HEK293 (cell line): ENCODE measurements at regions of chr10 and their contacts with region 1.

Region 1: DNA sequence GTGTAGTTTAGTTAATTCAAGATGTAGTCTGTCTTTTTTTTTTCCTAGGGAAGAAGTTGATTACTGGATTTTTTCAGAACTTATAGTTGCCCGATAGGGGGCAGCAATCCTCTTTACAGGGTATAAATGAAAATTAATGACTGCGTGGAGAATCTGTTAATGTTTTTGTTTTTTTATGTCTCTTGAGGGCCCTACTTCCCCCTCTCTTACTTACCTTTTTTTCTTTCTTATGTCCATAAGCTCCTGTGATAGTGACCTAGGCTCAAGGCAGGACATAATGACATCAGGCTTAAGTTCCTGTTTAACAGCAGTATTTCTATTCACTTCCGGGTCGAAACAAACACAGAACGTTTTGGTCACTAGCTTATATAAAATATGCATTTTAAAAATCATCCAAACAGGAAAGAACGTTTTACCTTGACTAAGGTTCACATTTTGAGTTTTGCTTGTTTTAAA is 18.8 kb downstream of the CDC123 start:
- H3K4me3 ChIP-seq: no peak overlapping the region
- H3K27ac ChIP-seq: no peak overlapping the region
- H3K4me1 ChIP-seq: 0 out of 2 replicates have a peak, but pooled peaks cover 7% of the 10 kb centered on the region
- CTCF ChIP-seq: no peak

Region 2: GRCh38 chr10:12111528-12111927 is 103.3 kb before region 1 on chr10:
- CTCF ChIA-PET with region 1: no interaction called
- POLR2A ChIA-PET with region 1: no interaction called
- H3K4me3 ChIP-seq: no peak overlapping the region
- H3K27ac ChIP-seq: no peak overlapping the region
- H3K4me1 ChIP-seq: no peaks in the 10 kb centered on the region
- CTCF ChIP-seq: no peak

Region 3: GRCh38 chr10:12202226-12202625 is 12.6 kb before region 1 on chr10:
- CTCF ChIA-PET with region 1: interaction called, 29 read pairs
- POLR2A ChIA-PET with region 1: no interaction called
- H3K4me3 ChIP-seq: no peak overlapping the region
- H3K27ac ChIP-seq: no peak overlapping the region
- H3K4me1 ChIP-seq: no peaks in the 10 kb centered on the region
- CTCF ChIP-seq: no peak

Region 4: GRCh38 chr10:12228851-12229250 is 14.1 kb after region 1 on chr10:
- CTCF ChIA-PET with region 1: interaction called, 23 read pairs
- POLR2A ChIA-PET with region 1: interaction called, 4 read pairs
- H3K4me3 ChIP-seq: no peak overlapping the region
- H3K27ac ChIP-seq: no peak overlapping the region
- H3K4me1 ChIP-seq: no peaks in the 10 kb centered on the region
- CTCF ChIP-seq: no peak

Region 5: GRCh38 chr10:12235796-12236195 is 21.0 kb after region 1 on chr10:
- CTCF ChIA-PET with region 1: interaction called, 11 read pairs
- POLR2A ChIA-PET with region 1: no interaction called
- H3K4me3 ChIP-seq: no peak overlapping the region
- H3K27ac ChIP-seq: no peak overlapping the region
- H3K4me1 ChIP-seq: no peaks in the 10 kb centered on the region
- CTCF ChIP-seq: no peak

Region 6: GRCh38 chr10:12656518-12657142 is 441.8 kb after region 1 on chr10:
- CTCF ChIA-PET with region 1: interaction called, 16 read pairs
- POLR2A ChIA-PET with region 1: no interaction called
- H3K4me3 ChIP-seq: no peak overlapping the region
- H3K27ac ChIP-seq: no peak overlapping the region
- H3K4me1 ChIP-seq: no peaks in the 10 kb centered on the region
- CTCF ChIP-seq: no peak

Region 7: GRCh38 chr10:12710594-12711349 is 496.0 kb after region 1 on chr10:
- CTCF ChIA-PET with region 1: interaction called, 33 read pairs
- POLR2A ChIA-PET with region 1: no interaction called
- H3K4me3 ChIP-seq: no peak overlapping the region
- H3K27ac ChIP-seq: peak overlapping the region; percentile 50
- H3K4me1 ChIP-seq: peaks cover 22% of the 10 kb centered on the region
- CTCF ChIP-seq: peak; percentile 72

Region 8: DNA sequence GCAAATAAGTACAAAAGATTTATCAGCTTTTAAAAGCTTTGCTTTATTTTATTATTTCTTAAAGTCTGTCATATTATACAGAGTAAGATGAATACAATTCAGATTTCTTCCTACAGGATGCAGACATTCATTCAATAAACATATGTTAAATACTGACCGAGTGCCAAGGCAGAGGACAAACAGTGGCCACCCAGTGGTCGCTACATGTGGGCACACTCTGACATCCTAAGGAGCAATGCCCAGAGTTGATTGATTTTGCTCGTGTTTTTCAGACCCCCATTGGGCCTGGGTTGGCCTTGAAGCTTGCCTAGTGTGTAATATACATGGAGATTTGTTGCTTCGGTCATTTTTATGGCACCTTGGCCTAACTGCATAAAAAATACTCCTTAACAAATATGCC is 585.5 kb after region 1 on chr10:
- CTCF ChIA-PET with region 1: no interaction called
- POLR2A ChIA-PET with region 1: no interaction called
- H3K4me3 ChIP-seq: no peak overlapping the region
- H3K27ac ChIP-seq: no peak overlapping the region
- H3K4me1 ChIP-seq: 0 out of 2 replicates have a peak, but pooled peaks cover 3% of the 10 kb centered on the region
- CTCF ChIP-seq: no peak

Region 9: DNA sequence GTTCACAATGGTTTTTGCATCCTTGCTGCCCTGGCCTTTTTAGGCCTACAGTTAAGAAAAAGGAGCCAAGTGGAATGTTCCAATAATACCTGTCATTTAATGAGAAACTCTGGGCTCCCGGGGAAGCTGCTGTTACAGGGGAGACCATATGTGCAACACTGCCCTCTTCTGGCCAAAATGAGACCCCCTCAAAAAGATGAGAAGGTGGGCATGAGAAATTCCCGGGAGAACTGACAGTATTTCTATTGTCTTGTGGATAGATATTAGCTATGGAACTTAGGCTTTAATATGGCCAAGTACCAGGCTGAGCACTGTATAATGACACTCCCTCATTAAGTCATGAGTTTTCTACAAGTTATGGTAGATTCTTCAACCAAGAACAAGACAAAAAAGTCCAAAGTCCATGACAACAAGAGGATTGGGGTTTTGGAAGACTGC is 687.4 kb after region 1 on chr10:
- CTCF ChIA-PET with region 1: interaction called, 11 read pairs
- POLR2A ChIA-PET with region 1: no interaction called
- H3K4me3 ChIP-seq: no peak overlapping the region
- H3K27ac ChIP-seq: no peak overlapping the region
- H3K4me1 ChIP-seq: no peaks in the 10 kb centered on the region
- CTCF ChIP-seq: peak; percentile 39; the same call in 1 of the 2 replicates